ENCODE measurements at regions of chr3 and their contacts with region 1.

Region 1: DNA sequence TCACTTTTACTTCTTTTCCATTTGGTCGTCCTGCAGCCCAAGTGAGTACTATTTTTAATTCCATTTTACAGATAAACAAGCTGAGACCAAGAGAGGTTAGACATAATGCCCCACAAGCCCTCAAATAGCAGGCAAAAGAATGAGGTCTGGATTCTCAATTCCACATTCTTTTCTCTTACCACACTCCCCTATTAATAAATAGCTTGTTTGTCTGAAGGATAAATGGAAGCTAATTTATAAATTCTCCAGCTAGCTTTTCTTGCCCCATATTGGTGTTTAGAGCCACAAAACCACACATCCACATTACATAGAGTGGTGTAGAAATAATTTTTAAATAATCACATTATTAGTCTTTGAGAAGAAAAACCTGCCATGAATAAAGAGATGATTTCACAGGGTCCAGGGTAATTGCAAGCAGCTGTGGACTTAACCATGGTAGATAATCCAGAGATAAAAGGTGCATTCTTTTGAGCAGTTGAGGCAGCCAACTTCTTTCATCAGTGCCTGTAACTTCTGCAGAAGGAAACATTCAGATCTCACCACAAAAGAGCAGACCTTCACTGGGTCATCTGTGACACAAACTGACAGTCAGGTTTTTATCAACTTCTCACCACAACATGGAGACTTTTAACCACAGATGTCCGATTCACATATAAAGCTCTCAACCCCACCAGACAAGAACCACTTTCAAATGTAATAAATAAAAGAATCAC is 313.4 kb upstream of the STT3B start:
- DNase-seq: no peak
- ATAC-seq: no peak
- H3K4me3 ChIP-seq: no peak overlapping the region
- H3K4me3 Mint-ChIP-seq: no peak overlapping the region
- H3K27ac ChIP-seq: no peak overlapping the region
- H3K27ac Mint-ChIP-seq: no peak overlapping the region
- H3K4me1 ChIP-seq: peaks cover 57% of the 10 kb centered on the region
- H3K4me1 Mint-ChIP-seq: peaks cover 91% of the 10 kb centered on the region
- H3K27me3 ChIP-seq: no peaks in the 10 kb centered on the region
- H3K27me3 Mint-ChIP-seq: no peaks in the 10 kb centered on the region
- CTCF ChIP-seq: no peak

Region 2: DNA sequence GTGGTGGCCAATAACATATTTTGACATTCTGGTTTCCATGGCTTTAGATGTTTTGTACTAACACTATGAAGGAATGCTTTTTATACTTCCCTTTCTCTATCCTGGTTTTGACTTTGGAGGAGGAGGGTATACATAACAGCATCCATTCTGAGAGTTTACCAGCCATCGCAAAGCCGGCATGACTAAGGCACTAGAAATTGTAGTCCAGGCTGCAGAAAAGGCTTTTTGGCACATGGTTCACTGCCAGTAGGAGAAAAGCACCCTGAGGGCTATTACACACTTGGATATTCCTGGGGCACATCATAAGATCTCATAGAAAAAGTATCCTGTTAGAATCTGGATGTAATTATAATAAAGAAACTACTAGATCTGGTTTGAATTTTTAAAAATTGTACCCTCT is 415.2 kb after region 1 on chr3:
- CTCF ChIA-PET with region 1: no interaction called
- POLR2A ChIA-PET with region 1: no interaction called
- intact Hi-C with region 1: loop called in 1 of 2 experiments (anchors 10 kb)
- DNase-seq: no peak
- ATAC-seq: no peak
- H3K4me3 ChIP-seq: no peak overlapping the region
- H3K4me3 Mint-ChIP-seq: no peak overlapping the region
- H3K27ac ChIP-seq: no peak overlapping the region
- H3K27ac Mint-ChIP-seq: peak overlapping the region; percentile 39
- H3K4me1 ChIP-seq: peaks cover 42% of the 10 kb centered on the region
- H3K4me1 Mint-ChIP-seq: peaks cover 46% of the 10 kb centered on the region
- H3K27me3 ChIP-seq: no peaks in the 10 kb centered on the region
- H3K27me3 Mint-ChIP-seq: no peaks in the 10 kb centered on the region
- CTCF ChIP-seq: no peak